Activated naive CD4-positive, alpha-beta T cell treated with anti-CD3 and anti-CD28 coated beads, Interleukin-2, amount 10 ng/mL, durations not matched to agents 7 days and 5 days (primary cell): ENCODE measurements at regions of chr14 and their contacts with region 1.

Region 1: GRCh38 chr14:24241829-24242443 is 487 bp downstream of the TINF2 start:
- DNase-seq: peak; percentile 96
- H3K4me3 Mint-ChIP-seq: peak overlapping the region; percentile 81
- H3K27ac Mint-ChIP-seq: peak overlapping the region; percentile 97
- H3K4me1 Mint-ChIP-seq: peaks cover 67% of the 10 kb centered on the region
- H3K27me3 Mint-ChIP-seq: no peaks in the 10 kb centered on the region

Region 2: GRCh38 chr14:24215495-24216344 is 26.2 kb before region 1 on chr14 and contains the start of gene MDP1:
- CTCF ChIA-PET with region 1: interaction called, 10 read pairs
- DNase-seq: peak; percentile 93
- H3K4me3 Mint-ChIP-seq: peak within 1 kb of the TSS; percentile 94
- H3K27ac Mint-ChIP-seq: peak within 1 kb of the TSS; percentile 95
- H3K4me1 Mint-ChIP-seq: peaks cover 56% of the 10 kb centered on the region
- H3K27me3 Mint-ChIP-seq: peaks cover 6% of the 10 kb centered on the region

Region 3: DNA sequence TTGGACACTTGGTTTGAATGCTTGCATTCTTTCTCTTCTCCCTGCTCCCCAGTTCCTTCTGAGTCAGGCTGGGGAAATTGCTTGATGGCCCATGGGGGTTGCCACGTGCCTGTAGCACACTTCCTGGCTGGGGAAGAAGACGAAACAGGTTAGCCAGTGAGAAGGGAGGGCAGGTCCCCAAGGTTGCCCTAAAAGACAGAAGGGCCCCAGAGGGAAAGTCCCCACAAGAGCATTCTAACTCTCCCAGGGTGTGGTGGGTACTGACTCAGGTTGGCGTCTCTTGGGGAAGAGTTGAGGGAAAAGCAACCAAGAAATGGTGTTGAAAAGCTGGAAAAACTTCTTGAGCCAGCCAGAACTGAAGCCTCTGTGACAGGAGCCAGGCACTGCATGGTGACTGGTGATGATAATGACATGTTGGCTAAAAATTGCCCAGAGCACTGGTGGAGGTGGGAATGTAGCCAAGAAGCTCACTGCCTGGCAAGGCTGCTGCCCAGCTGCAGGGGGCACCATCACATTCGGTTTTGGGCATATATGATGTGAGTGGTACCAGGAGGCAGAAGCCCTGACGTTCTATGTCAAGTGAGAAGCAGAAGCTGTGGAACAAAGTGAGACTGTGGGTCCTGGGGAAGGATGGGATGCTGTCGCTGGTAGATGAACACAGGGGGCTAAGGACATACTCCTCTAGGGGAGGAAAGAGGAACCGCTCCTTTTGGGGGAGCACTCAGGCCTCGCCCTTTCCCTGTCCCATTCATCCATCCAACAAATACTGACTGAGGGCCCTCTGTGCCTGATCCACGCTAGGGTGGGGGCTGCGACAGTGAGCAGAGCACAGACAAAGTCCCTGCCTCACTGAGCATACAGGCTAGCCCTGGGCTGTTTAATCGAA is 37.6 kb after region 1 on chr14:
- CTCF ChIA-PET with region 1: interaction called, 19 read pairs
- DNase-seq: peak; percentile 55
- H3K4me3 Mint-ChIP-seq: no peak overlapping the region
- H3K27ac Mint-ChIP-seq: no peak overlapping the region
- H3K4me1 Mint-ChIP-seq: peaks cover 37% of the 10 kb centered on the region
- H3K27me3 Mint-ChIP-seq: peaks cover 13% of the 10 kb centered on the region

Region 4: DNA sequence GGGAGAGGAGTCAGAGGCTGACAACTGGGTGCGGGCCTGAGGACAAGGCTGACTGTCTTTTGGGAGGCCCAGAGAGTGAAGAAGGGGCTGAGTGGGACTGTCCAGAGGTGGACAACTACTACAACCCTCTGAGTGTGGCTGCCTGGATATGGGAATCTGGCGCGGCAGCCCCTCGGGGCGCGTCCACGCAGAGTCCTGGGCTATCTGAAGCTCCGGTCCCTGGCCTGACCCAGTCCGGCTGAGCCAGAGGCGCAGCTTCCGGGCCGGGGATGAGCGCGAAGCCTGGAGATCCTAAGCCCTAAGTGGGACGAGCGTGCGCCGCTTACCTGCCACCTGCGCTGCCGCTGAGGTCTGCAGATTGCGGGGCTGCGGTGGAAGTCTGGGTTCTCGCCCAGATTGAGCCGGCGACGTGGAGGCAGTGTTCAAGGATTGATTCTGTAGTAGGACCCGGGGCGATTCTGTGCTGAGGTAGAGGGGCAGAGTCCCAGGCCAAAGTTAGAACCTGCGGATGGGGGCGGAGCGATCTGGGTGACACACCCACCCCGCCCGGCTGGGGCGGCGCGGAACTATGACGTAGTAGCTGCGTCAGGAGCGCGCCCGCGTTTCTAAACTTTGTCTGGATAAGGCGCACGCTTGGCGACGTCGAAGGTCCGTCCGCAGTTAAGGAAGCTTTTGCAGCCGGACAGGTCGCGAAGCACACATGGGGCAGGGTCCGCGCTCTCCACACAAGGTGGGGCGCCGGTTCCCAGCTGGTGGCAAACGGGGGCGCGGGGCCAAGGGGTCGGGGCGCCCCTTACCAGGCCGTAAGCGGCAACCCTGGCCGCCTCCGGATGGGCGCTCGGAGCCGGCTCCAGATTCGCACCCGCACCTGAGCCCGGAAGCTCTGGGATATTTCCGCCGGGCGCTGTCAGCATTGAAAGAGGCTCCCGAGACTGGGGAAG is 57.6 kb after region 1 on chr14 and contains the starts of genes DHRS1 and NOP9:
- CTCF ChIA-PET with region 1: interaction called, 223 read pairs
- DNase-seq: peak; percentile 94
- H3K4me3 Mint-ChIP-seq: peak within 1 kb of the TSS; percentile 93
- H3K27ac Mint-ChIP-seq: peak within 1 kb of the TSS; percentile 93
- H3K4me1 Mint-ChIP-seq: peaks cover 58% of the 10 kb centered on the region
- H3K27me3 Mint-ChIP-seq: peaks cover 5% of the 10 kb centered on the region

Region 5: DNA sequence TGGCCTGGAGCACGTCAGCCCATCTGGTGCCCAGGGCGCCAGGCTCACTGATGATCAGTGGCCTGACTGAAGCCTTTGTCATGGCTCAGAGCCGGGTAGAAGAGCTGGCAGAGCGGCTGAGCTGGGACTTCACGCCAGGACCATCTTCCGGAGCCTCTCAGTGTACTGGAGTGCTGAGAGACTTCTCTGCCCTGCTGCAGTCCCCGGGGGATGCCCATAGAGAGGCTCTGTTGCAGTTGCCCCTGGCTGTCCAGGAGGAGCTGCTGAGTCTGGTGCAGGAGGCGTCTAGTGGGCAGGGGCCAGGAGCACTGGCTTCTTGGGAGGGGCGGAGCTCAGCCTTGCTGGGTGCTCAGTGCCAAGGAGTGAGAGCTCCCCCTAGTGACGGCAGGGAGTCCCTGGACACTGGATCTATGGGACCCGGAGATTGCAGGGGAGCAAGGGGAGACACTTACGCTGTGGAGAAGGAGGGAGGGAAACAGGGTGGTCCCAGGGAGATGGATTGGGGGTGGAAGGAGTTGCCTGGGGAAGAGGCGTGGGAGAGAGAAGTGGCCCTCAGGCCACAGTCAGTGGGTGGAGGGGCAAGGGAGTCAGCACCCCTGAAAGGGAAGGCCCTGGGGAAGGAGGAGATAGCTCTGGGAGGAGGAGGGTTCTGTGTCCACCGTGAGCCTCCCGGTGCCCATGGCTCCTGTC is 189.8 kb after region 1 on chr14:
- CTCF ChIA-PET with region 1: interaction called, 21 read pairs
- DNase-seq: peak; percentile 95
- H3K4me3 Mint-ChIP-seq: peak overlapping the region; percentile 92
- H3K27ac Mint-ChIP-seq: peak overlapping the region; percentile 96
- H3K4me1 Mint-ChIP-seq: peaks cover 65% of the 10 kb centered on the region
- H3K27me3 Mint-ChIP-seq: no peaks in the 10 kb centered on the region

Region 6: DNA sequence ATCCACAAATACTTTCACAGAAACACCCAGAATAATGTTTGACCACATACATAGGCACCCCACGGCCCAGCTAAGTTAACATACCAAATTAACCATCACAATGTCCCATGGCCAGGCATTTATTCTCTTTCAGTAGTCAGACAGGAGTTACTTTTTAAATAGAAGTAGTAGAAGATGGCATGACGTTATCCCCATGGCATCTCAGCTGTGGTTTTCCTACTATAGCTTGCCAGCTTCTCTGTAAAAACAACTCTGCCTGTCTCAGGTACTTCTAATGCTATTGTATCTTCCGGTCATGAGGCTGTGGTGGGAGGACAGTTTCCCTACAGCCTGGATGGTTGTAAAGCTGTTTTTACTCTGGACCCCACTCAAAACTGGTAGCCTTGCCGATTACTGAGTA is 314.8 kb after region 1 on chr14:
- CTCF ChIA-PET with region 1: no interaction called
- DNase-seq: no peak
- H3K4me3 Mint-ChIP-seq: no peak overlapping the region
- H3K27ac Mint-ChIP-seq: no peak overlapping the region
- H3K4me1 Mint-ChIP-seq: no peaks in the 10 kb centered on the region
- H3K27me3 Mint-ChIP-seq: no peaks in the 10 kb centered on the region